Left cardiac atrium (tissue), 4 donors: ENCODE measurements at regions of chr2 and their contacts with region 1.

Region 1: GRCh38 chr2:119218478-119219064 is 5.1 kb upstream of the STEAP3 start:
- DNase-seq: no peak
- ATAC-seq: peak in 1 of 2 donors; percentile 17

Region 2: DNA sequence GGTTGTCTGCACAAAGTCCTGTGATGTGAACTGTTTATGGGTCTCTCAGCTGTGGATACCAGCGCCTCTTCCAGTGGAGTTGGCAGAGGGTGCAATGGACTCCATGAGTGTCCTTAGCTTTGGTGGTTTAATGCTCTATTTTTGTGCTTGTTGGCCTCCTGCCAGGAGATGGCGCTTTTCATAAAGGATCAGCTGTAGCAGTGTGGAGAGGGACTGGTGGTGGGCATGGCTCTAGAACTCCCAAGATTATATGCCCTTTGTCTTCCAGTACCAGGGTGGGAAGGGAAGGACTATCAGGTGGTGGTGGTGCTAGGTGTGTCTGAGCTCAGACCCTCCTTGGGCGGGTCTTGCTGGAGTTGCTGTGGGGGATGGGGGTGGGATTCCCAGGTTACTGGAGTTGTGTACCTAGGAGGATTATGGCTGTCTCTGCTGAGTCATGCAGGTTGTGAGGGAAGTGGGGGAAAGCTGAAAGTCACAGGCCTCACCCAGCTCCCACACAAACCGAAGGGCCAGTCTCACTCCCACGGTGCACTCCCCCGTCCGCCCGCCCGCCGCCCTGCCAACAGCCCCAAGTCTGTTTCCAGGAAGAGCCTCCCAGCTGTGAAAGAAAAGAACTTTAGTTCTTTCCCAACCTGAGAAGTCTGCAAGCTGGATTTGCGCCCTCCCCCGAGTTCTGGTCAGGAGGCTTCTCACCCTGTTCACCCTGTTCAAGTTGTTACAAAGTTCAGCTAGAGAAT is 168.4 kb before region 1 on chr2:
- intact Hi-C with region 1: no loop called
- DNase-seq: no peak
- ATAC-seq: peak; percentile 30 to 74

Region 3: GRCh38 chr2:119264781-119265692 is 46.5 kb after region 1 on chr2:
- intact Hi-C with region 1: loop called in 1 of 2 experiments (anchors 10 kb)
- DNase-seq: no peak
- ATAC-seq: peak; percentile 61 to 85

Region 4: DNA sequence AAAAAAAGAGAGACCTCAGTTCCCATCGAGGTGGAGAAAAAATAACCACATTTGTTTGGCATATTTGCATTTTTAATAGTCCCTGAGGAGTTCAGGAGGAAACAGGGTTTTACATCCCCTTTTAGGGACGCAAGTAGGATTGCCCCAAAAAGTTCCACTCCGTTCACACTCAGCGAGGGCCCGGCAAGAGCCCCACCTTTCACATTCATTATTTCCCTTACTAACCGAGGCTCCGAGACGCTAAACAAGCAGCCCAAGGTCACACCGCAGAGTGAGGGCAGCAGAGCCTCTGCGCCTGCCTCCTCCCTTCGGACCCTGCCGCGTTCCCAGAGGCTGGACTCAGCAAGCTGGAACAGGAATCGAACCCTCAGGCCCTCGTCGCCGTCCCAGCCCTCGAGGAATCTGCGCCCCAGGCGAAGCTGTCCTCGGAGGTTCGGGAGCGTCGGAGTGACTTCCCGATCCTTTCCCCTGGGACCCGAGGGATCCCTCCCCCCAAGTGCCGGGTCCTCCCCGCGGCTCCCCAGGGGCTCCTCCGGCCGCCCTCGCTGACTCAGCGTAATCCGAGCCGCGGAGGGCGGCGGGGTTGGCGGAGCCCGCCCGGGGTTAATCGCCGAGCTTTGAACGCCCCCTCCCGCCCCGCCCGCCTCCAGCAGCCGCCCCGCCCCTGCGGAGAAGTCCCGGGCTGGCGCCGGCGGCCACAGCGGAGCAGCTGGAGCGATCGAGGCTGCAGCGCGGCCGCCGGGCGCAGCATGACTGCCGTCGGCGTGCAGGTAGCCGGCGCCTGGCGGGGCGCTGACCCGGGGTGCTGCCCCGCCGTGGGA is 212.8 kb after region 1 on chr2 and contains the start of gene TMEM37:
- intact Hi-C with region 1: no loop called
- DNase-seq: peak; percentile 76
- ATAC-seq: peak; percentile 91 to 92
- total RNA-seq, gene TMEM37: 6.1 to 16.4 TPM

Region 5: GRCh38 chr2:120453635-120453998 is 1235.0 kb after region 1 on chr2:
- intact Hi-C with region 1: no loop called
- DNase-seq: no peak
- ATAC-seq: peak in 1 of 2 donors; percentile 75